Posterior cingulate gyrus (tissue), 11 donors: ENCODE measurements at regions of chr2 and their contacts with region 1.

Region 1: GRCh38 chr2:106098081-106098480 is 96.0 kb downstream of the UXS1 start:
- DNase-seq: no peak

Region 2: GRCh38 chr2:105576440-105577252 is 521.4 kb before region 1 on chr2:
- intact Hi-C with region 1: loop called (anchors 10 kb)
- DNase-seq: peak in 2 of 10 donors; percentile 68 to 71